GM12878 (cell line): ENCODE measurements at regions of chr5 and their contacts with region 1.

Region 1: GRCh38 chr5:99025298-99026045 is 96.7 kb upstream of the CHD1 start:
- DNase-seq: no peak
- ATAC-seq: no peak
- H3K4me3 ChIP-seq: no peak overlapping the region
- H3K27ac ChIP-seq: peak overlapping the region; percentile 95
- H3K4me1 ChIP-seq: peaks cover 41% of the 10 kb centered on the region
- H3K27me3 ChIP-seq: no peaks in the 10 kb centered on the region
- CTCF ChIP-seq: no peak
- EP300 ChIP-seq: peak in 1 of 2 experiments; percentile 42; a peak in 2 of 4 replicates
- POLR2A ChIP-seq: no peak
- RAD21 ChIP-seq: no peak

Region 2: GRCh38 chr5:99004960-99005359 is 20.5 kb before region 1 on chr5:
- CTCF ChIA-PET with region 1: interaction called, 4 read pairs
- POLR2A ChIA-PET with region 1: interaction called, 3 read pairs
- RAD21 ChIA-PET with region 1: interaction called, 13 read pairs
- SMC1A ChIA-PET with region 1: interaction called, 9 read pairs
- in situ Hi-C with region 1: no loop called
- intact Hi-C with region 1: loop called (anchors 2 kb)
- DNase-seq: peak; percentile 61
- ATAC-seq: peak; percentile 98
- H3K4me3 ChIP-seq: no peak overlapping the region
- H3K27ac ChIP-seq: no peak overlapping the region
- H3K4me1 ChIP-seq: peaks cover 8% of the 10 kb centered on the region
- H3K27me3 ChIP-seq: no peaks in the 10 kb centered on the region
- CTCF ChIP-seq: no peak; a peak in 1 of 6 replicates
- EP300 ChIP-seq: peak; percentile 38 to 72; a peak in 1 of 4 replicates
- POLR2A ChIP-seq: no peak
- RAD21 ChIP-seq: no peak